Spleen (tissue), 13 donors: ENCODE measurements at regions of chr18 and their contacts with region 1.

Region 1: GRCh38 chr18:73835656-73836364 is 311.8 kb downstream of the FBXO15 start:
- DNase-seq: no peak
- H3K4me3 ChIP-seq: no peak overlapping the region
- H3K27ac ChIP-seq: no peak overlapping the region
- H3K4me1 ChIP-seq: no peaks in the 10 kb centered on the region
- H3K27me3 ChIP-seq: no peaks in the 10 kb centered on the region
- CTCF ChIP-seq: no peak
- POLR2A ChIP-seq: no peak

Region 2: DNA sequence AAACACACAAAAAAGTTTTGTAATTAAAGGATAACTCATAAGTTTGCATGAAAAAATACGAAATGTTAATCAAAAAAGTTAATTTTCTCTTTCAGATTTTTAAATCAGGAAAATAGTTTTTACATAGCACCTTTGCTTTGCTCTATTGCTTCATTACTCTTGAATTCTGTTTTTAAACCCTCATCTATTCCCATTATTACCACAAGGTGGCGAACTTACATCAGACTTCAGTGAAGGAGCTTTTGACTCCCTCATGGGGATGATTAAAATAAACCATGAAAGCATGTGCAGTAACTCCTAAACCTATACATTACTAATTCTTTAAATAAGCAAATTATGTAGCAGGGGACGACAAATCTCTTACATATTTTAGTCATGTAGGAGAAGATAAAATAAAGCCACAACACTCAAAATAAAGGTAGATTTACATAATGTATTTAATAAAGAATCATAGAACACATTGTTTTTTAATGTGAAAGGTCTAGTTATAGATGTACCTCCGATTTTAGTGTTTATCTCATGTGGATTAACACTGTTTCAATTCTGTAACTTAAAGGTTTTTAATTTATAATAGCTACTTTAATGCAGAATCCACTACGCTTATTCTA is 1073.2 kb before region 1 on chr18:
- intact Hi-C with region 1: loop called (anchors 5 kb)
- DNase-seq: no peak
- H3K4me3 ChIP-seq: no peak overlapping the region
- H3K27ac ChIP-seq: no peak overlapping the region
- H3K4me1 ChIP-seq: no peaks in the 10 kb centered on the region
- H3K27me3 ChIP-seq: no peaks in the 10 kb centered on the region
- CTCF ChIP-seq: peak in 10 of 11 experiments; percentile 28 to 79 (median 61)
- POLR2A ChIP-seq: no peak

Region 3: DNA sequence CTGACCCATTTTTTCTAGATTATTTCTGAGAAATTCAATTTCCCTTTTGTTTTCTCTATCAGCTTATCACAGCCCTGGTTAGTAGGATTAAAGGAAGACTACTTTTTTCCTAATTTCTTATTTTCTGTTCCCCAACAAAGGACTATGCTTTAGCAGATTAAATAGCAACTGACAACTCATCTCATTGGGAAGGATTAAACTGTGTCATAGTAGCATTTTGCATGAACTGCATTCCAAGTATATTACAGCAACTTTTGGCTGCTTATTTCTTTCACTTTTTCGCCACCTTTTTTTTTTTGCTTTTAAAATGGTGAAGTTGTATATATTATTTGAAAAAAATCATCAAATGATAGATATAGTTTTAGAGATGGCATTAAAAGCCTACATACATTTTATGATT is 258.4 kb before region 1 on chr18:
- intact Hi-C with region 1: no loop called
- DNase-seq: no peak
- H3K4me3 ChIP-seq: no peak overlapping the region
- H3K27ac ChIP-seq: no peak overlapping the region
- H3K4me1 ChIP-seq: no peaks in the 10 kb centered on the region
- H3K27me3 ChIP-seq: no peaks in the 10 kb centered on the region
- CTCF ChIP-seq: no peak
- POLR2A ChIP-seq: no peak